ENCODE measurements at regions of chr7 and their contacts with region 1.

Region 1: DNA sequence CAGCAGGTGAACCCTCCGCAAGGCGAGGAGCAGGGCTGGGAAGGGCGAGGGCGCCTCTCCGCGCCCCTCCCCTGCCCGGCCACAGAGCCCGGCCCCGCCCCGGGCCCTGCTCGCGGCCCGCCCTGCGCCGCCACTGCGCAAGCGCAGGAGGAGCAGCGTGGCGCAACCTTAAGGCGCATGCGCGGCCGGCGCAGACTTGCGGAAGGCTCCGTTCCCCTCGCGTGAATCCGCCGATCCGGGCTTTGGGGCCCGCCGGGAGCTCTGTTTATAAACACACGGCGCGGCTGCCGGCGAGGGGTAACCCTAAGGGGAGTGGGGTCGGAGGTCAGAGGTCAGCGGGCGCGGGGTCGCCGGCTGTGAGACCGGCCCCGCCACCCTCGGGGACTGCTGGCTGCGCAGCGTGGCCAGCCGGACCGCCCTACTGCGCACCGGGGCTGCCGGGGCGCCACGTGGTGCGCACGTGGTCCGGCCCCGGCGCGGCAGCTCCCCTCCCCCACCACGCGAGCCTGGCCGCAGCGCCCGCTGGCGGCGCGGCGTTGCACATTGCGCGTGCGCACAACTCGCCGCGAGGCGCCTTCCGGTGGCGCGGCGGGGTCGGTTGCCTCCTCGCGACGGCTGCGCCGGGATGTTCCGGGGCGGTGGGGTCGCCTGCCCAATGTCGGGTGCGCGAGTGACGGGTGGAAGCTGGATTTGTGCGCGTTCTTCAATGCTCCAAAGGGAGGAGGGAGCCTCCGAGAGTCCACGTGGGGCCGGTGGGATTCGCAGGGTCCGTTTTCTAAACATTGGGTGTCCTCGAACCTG is 40.2 kb upstream of the FOXK1 start:
- DNase-seq: peak; percentile 96

Region 2: GRCh38 chr7:4681886-4682620 is 40.2 kb after region 1 on chr7 and contains the start of gene FOXK1:
- intact Hi-C with region 1: loop called (anchors 1 kb)
- DNase-seq: peak; percentile 83
- total RNA-seq, gene FOXK1: 29.7 TPM

Region 3: DNA sequence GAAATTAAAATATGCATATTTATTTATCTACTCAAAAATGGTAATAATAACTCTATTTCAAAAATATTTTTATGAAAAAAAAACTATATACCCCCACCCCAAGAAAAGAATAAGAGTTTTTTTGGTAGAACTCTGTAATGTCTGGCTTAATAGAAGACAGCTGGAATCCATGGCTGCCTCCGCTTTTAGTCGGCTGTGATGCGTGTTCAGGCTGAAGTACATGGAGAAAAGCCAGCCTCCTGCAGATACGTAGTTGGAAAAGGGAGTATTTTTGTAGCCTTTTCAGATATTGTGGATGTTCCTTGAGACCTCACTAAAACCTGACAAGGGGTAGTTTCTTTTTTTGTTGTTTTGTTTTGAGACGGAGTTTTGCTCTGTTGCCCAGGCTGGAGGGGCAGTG is 50.2 kb after region 1 on chr7:
- intact Hi-C with region 1: no loop called
- DNase-seq: no peak

Region 4: GRCh38 chr7:4738711-4739527 is 97.1 kb after region 1 on chr7:
- intact Hi-C with region 1: loop called (anchors 5 kb)
- DNase-seq: no peak

Region 5: DNA sequence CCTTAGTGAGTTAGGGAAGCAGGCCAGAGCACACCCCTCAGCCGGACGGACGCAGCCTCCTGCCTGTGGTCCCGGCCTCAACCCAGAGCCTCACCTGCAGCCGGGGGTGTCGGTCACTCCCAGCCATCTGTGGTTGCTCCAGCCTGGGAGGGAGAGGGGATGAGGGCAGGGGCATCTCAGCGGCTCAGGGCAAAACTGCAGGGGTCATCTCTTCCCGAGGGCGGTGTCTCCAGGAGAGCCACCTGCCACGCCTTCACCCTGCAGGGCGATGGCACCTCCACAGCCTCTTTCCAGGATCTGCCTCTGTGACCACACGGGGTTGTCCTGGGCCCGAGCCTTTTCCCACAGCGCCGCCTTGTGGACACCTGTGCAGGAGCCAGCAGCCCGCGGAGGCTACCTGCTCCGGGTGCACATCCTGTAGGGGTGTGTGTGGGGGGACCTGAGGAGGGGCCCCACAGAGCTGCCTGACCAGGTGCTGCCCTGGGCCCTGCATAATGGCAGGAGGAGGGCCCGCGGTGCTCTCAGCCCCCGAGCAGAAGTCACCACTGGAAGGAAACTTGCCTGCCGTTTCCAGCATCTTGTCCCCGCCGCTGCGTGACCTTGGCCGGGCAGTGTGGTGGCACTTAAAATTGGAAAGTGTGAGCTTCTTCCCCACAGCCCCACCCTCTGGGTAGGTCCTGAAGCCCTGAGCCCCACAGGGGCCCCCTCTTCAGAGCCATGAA is 112.0 kb after region 1 on chr7:
- intact Hi-C with region 1: loop called (anchors 5 kb)
- DNase-seq: peak; percentile 95

Region 6: GRCh38 chr7:4797858-4798705 is 156.2 kb after region 1 on chr7:
- intact Hi-C with region 1: no loop called
- DNase-seq: no peak

Measured in cardiac septum (tissue), 1 donor.